ENCODE measurements at regions of chr22 and their contacts with region 1.

Region 1: GRCh38 chr22:46035742-46036557 is 59.0 kb upstream of the WNT7B start:
- DNase-seq: no peak
- ATAC-seq: peak; percentile 93
- H3K4me3 ChIP-seq: peak overlapping the region; percentile 65 to 74
- H3K27ac ChIP-seq: peak overlapping the region; percentile 95
- H3K4me1 ChIP-seq: peaks cover 55% of the 10 kb centered on the region
- H3K27me3 ChIP-seq: no peaks in the 10 kb centered on the region
- CTCF ChIP-seq: no peak

Region 2: DNA sequence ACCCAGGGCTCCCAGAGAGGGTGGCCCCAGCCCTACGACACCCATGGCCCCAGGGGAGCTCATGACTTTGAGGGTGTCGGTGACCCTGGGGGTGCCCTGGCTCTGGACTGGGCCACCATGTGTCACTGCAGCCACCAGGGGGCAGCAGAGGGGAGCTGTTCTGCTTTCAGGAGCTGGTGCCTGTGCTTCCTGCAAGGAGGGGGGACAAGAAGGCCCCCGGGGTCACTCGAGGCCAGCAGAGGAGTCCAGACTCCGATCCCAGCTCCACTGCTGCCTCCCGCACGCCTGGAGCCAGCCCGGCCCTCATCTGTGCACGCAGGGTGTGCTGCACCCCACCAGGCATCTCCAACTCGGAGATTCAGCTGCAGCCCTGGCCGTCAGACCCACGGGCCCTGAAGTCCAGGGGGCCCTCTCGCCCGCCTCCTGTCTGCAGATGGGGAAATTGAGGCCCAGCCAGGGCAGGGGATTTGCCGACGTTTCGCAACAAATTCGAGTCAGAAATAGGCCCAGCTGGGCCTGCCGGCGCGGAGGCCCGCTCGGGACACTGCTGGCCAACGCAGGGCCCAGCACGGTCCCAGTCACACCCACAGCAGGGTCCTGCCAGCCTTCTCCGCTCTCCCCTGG is 29.5 kb before region 1 on chr22:
- CTCF ChIA-PET with region 1: interaction called, 20 read pairs
- POLR2A ChIA-PET with region 1: no interaction called
- in situ Hi-C with region 1: no loop called
- intact Hi-C with region 1: no loop called
- DNase-seq: no peak
- ATAC-seq: peak; percentile 81
- H3K4me3 ChIP-seq: peak overlapping the region in 1 of 2 experiments; percentile 32; a peak in 2 of 4 replicates
- H3K27ac ChIP-seq: peak overlapping the region; percentile 87
- H3K4me1 ChIP-seq: peaks cover 28% of the 10 kb centered on the region
- H3K27me3 ChIP-seq: no peaks in the 10 kb centered on the region
- CTCF ChIP-seq: peak; percentile 90

Region 3: GRCh38 chr22:46046299-46046685 is 10.3 kb after region 1 on chr22:
- CTCF ChIA-PET with region 1: no interaction called
- POLR2A ChIA-PET with region 1: no interaction called
- in situ Hi-C with region 1: no loop called
- intact Hi-C with region 1: no loop called
- DNase-seq: no peak
- ATAC-seq: no peak
- H3K4me3 ChIP-seq: no peak overlapping the region
- H3K27ac ChIP-seq: peak overlapping the region; percentile 74
- H3K4me1 ChIP-seq: peaks cover 37% of the 10 kb centered on the region
- H3K27me3 ChIP-seq: no peaks in the 10 kb centered on the region
- CTCF ChIP-seq: no peak

Region 4: DNA sequence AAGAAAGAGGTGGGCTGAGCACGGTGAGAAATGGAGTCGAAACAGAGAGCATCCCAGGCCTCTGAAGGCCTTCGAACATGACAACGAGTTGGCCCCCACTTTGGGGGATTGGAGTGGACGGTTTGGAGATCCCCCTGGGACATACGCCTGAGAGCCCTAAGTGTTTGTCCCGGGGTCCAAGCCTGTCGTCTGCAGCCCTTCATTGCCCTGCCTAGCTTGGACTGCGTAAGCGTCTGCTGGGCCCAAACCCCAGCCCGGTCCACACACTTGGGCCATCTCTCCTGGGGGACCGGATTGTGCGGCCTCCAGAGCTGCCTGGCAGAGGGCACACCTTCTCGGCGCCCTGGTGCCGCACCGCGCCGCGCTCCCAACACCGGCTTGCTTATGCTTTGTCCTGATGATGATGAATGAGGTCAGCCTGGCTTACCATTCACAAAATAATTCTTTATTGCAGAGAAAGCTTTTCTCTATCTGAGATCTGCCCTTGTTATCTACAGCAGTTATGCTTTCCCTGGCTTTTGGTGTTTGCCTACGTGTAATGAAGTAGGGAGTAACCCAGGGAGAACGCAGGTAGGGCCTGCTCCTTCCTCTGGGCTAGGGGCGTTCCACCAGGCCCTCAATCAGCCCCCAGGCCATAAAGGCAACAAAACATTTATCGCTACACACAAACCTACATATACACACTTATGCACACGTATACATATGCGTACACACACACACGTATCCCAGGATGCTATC is 28.4 kb after region 1 on chr22:
- CTCF ChIA-PET with region 1: no interaction called
- POLR2A ChIA-PET with region 1: no interaction called
- in situ Hi-C with region 1: no loop called
- intact Hi-C with region 1: no loop called
- DNase-seq: no peak
- ATAC-seq: peak; percentile 52
- H3K4me3 ChIP-seq: peak overlapping the region; percentile 30 to 45
- H3K27ac ChIP-seq: peak overlapping the region; percentile 100
- H3K4me1 ChIP-seq: peaks cover 39% of the 10 kb centered on the region
- H3K27me3 ChIP-seq: no peaks in the 10 kb centered on the region
- CTCF ChIP-seq: no peak

Region 5: DNA sequence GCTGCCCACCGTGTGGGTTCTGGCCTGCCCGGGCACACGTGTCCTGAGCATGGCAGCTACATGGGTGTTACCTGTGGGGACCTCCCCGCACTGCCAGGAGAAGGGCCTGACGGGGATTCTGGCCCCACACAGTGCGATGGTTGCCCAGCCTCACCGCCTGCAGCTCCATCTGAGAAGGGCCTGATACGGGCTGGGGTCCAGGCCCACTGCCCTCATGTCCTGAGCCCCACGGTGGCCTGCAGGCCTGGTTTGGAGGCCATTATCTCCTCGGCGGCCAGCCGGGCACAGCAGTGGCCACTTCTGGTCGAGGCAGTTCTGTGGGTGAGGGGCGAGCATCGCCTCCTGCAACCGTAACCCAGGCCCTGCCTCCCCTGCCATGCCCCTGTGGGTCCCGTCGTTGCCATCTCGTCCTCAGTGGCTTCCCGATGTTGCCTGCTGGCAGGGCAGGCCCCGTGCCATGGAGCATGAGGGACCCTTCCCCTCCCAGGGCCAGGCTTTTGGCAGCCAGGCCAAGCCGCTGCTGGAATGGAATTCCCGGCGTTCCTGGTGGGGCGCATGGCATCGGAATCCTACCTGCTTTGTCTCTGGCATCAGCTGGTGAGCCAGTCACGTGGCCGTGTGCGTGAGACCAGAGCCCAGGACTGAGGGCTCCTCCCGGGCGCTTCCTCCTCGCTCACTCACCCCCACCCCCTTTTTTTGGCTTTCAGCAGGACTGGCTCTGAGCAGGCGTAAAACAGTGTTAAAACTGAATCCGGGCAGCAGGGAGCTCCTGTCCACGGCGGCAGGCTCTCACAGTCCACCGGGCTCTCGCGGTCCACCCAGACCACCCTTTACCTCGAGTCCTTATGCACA is 42.5 kb after region 1 on chr22:
- CTCF ChIA-PET with region 1: no interaction called
- POLR2A ChIA-PET with region 1: interaction called, 11 read pairs
- in situ Hi-C with region 1: no loop called
- intact Hi-C with region 1: no loop called
- DNase-seq: no peak
- ATAC-seq: peak; percentile 32
- H3K4me3 ChIP-seq: peak overlapping the region; percentile 83 to 90
- H3K27ac ChIP-seq: peak overlapping the region; percentile 99
- H3K4me1 ChIP-seq: peaks cover 27% of the 10 kb centered on the region
- H3K27me3 ChIP-seq: no peaks in the 10 kb centered on the region
- CTCF ChIP-seq: no peak

Region 6: GRCh38 chr22:46290121-46290842 is 254.3 kb after region 1 on chr22:
- CTCF ChIA-PET with region 1: interaction called, 10 read pairs
- POLR2A ChIA-PET with region 1: no interaction called
- in situ Hi-C with region 1: no loop called
- intact Hi-C with region 1: no loop called
- DNase-seq: no peak
- ATAC-seq: no peak
- H3K4me3 ChIP-seq: no peak overlapping the region
- H3K27ac ChIP-seq: no peak overlapping the region
- H3K4me1 ChIP-seq: no peaks in the 10 kb centered on the region
- H3K27me3 ChIP-seq: no peaks in the 10 kb centered on the region
- CTCF ChIP-seq: no peak